AG04450 (cell line): ENCODE measurements at regions of chr5 and their contacts with region 1.

Region 1: DNA sequence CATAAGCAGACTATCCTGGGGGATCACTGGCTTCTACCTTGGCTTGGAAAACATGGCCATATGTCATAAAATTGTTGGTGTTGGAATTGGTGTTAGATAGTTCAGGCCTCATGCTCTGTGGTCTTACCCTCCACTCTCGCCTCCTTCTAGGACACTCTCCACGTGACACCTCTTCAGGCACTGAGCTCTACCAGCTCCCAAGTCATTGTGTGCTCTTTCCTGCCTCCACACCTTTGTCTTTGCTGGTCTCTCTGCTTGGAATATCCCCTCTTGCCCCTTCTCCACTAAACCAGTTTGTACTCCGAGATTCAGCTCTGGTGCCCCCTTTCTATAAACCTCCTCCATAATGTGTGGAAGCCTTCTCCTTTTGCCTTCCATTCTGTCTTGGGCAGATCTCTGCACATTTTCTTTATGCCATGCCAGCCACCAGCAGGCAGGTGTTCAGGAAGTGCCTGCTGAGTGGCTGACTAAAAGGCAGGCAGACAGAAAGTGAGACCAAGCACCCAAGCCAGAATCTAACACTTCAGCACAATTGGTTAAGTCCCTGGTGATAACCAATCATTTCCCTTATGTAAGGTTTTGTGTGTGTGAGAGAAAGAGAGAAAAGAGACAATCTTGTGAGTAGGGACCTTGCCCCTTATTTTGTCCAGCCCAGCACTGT is 37.7 kb downstream of the SAR1B start:
- DNase-seq: no peak
- H3K4me3 ChIP-seq: no peak overlapping the region
- H3K27ac ChIP-seq: no peak overlapping the region
- H3K27me3 ChIP-seq: no peaks in the 10 kb centered on the region
- CTCF ChIP-seq: no peak

Region 2: DNA sequence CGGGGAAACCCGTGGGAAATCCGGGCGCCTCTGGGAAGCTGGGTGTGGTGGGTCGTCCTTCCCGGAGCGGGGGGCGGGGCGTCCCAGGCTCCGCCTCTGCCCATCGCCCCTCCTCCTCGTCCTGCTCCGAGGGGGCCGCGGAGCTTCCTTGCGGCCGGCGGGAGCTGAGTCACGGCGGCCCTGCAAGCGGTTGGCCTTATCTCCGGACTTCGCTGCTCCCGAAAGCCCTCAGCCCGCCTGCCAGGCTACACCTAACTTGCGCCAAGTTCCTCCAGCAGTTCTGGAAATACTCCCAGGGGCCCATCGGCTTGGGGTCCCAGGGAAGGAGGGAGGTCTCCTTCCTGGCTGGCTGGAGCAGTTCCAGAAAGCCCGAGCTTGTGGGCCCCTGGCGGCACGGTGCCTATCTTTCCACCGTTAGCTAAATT is 129.1 kb before region 1 on chr5:
- CTCF ChIA-PET with region 1: no interaction called
- POLR2A ChIA-PET with region 1: interaction called, 10 read pairs
- DNase-seq: peak; percentile 72
- H3K4me3 ChIP-seq: peak overlapping the region; percentile 54
- H3K27ac ChIP-seq: peak overlapping the region; percentile 94
- H3K27me3 ChIP-seq: no peaks in the 10 kb centered on the region
- CTCF ChIP-seq: 0 out of 2 replicates have a peak, but pooled peaks have one; percentile 2